Posterior vena cava (tissue), 2 donors: ENCODE measurements at regions of chr3 and their contacts with region 1.

Region 1: GRCh38 chr3:182713743-182714517 is 79.4 kb upstream of the ATP11B start:
- DNase-seq: no peak

Region 2: GRCh38 chr3:182618085-182618732 is 95.7 kb before region 1 on chr3:
- intact Hi-C with region 1: no loop called
- DNase-seq: no peak

Region 3: GRCh38 chr3:182740710-182741109 is 26.8 kb after region 1 on chr3:
- intact Hi-C with region 1: no loop called
- DNase-seq: no peak

Region 4: DNA sequence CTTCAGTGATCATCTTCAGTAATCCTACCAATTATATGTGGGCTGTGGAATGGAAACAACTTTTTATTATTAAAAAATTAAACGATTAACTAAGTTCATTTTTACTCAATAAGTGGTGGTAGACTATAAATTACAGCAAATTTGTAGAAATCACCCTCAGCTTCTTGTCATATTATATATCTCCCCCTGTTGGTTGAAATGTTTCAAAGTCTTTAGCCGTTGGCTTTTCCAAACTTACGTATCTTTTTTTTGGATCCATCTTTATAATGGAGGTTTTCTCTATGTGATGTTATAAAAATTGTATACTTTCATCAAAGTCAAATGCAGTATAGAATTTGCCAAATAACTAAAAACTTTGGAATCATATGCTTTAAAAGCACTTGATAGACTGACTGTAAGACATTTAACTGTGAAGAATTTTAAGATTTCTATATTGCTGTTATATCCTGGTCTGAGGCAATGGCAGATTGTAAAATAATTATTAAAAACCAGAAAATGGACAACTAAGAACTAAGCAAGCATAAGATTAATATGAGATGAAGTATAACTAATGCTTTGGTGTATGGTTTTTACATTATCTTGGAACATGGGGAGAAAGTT is 124.0 kb after region 1 on chr3:
- intact Hi-C with region 1: loop called (anchors 5 to 10 kb)
- DNase-seq: no peak